ENCODE measurements at regions of chr5 and their contacts with region 1.

Region 1: GRCh38 chr5:143222287-143223231 is 180.9 kb downstream of the NR3C1 start:
- DNase-seq: peak; percentile 74
- H3K4me3 Mint-ChIP-seq: peak overlapping the region; percentile 43
- H3K27ac Mint-ChIP-seq: peak overlapping the region; percentile 97
- H3K4me1 Mint-ChIP-seq: peaks cover 82% of the 10 kb centered on the region
- H3K27me3 Mint-ChIP-seq: no peaks in the 10 kb centered on the region

Region 2: GRCh38 chr5:143033535-143034250 is 188.9 kb before region 1 on chr5:
- intact Hi-C with region 1: loop called (anchors 5 kb)
- DNase-seq: no peak
- H3K4me3 Mint-ChIP-seq: no peak overlapping the region
- H3K27ac Mint-ChIP-seq: no peak overlapping the region
- H3K4me1 Mint-ChIP-seq: peaks cover 70% of the 10 kb centered on the region
- H3K27me3 Mint-ChIP-seq: no peaks in the 10 kb centered on the region

Region 3: GRCh38 chr5:143051244-143052058 is 171.1 kb before region 1 on chr5:
- intact Hi-C with region 1: loop called (anchors 2 kb)
- DNase-seq: no peak
- H3K4me3 Mint-ChIP-seq: no peak overlapping the region
- H3K27ac Mint-ChIP-seq: no peak overlapping the region
- H3K4me1 Mint-ChIP-seq: peaks cover 62% of the 10 kb centered on the region
- H3K27me3 Mint-ChIP-seq: no peaks in the 10 kb centered on the region

Region 4: GRCh38 chr5:143241892-143242291 is 19.3 kb after region 1 on chr5:
- intact Hi-C with region 1: no loop called
- DNase-seq: no peak
- H3K4me3 Mint-ChIP-seq: no peak overlapping the region
- H3K27ac Mint-ChIP-seq: no peak overlapping the region
- H3K4me1 Mint-ChIP-seq: peaks cover 2% of the 10 kb centered on the region
- H3K27me3 Mint-ChIP-seq: no peaks in the 10 kb centered on the region

Region 5: GRCh38 chr5:143262393-143263174 is 40.0 kb after region 1 on chr5:
- intact Hi-C with region 1: loop called (anchors 2 kb)
- DNase-seq: no peak
- H3K4me3 Mint-ChIP-seq: no peak overlapping the region
- H3K27ac Mint-ChIP-seq: no peak overlapping the region
- H3K4me1 Mint-ChIP-seq: peaks cover 25% of the 10 kb centered on the region
- H3K27me3 Mint-ChIP-seq: no peaks in the 10 kb centered on the region